GM12878 (cell line): ENCODE measurements at regions of chr12 and their contacts with region 1.

Region 1: DNA sequence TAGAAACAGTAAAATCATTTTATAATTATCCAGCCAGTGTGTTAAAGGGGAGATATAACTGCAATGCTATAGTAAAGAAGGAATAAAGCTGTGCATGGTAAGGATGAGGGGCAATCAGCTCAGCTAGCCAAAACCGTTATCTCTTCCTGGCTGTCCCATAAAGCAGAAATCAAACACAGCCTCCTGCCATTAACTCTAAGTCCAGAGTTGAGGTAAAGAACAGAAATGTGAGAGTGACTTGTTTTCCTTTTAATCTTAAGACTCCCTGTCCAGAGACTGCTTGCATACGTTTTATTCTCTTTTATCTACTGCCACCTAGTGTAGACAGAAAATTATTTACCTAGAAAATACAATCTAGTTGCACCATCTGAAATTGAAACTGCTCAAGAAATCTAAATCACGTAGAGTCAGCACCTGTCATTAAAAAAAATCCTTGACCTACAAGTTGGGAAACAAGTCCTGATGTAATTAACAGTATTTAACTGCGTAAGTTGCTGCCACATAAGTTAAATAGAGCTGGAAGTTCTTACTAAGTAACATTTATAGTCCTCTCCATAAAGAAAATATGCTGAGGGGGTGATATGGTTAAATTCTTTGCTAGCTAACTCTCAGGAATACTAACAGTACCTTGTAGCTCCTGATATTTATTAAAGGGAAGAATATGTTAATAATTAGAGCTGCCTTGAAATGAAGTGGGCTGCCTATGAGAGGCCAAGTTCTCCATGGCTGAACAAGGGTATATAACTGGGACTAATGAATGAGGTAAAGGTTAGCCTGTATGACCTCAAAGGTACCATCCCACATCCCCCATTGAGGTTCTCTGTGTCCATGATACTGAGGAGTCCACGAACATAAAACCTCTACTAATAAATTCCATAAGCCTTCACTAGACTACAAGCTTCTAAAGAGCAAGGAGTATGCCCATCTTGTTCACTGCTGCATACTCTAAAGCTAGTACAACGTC is 62.7 kb downstream of the GALNT4 start:
- DNase-seq: no peak
- ATAC-seq: peak; percentile 97
- H3K4me3 ChIP-seq: no peak overlapping the region
- H3K27ac ChIP-seq: no peak overlapping the region
- H3K4me1 ChIP-seq: no peaks in the 10 kb centered on the region
- H3K27me3 ChIP-seq: no peaks in the 10 kb centered on the region
- CTCF ChIP-seq: peak; percentile 30 to 68 (median 55); a peak in 5 of 6 replicates
- EP300 ChIP-seq: no peak
- POLR2A ChIP-seq: no peak
- RAD21 ChIP-seq: peak; percentile 90

Region 2: GRCh38 chr12:89019408-89020120 is 442.4 kb before region 1 on chr12:
- CTCF ChIA-PET with region 1: interaction called, 94 read pairs
- POLR2A ChIA-PET with region 1: no interaction called
- RAD21 ChIA-PET with region 1: interaction called, 31 read pairs
- SMC1A ChIA-PET with region 1: interaction called, 23 read pairs
- in situ Hi-C with region 1: loop called (anchors 5 kb)
- intact Hi-C with region 1: loop called (anchors 1 kb)
- DNase-seq: peak; percentile 32
- ATAC-seq: peak; percentile 99
- H3K4me3 ChIP-seq: no peak overlapping the region
- H3K27ac ChIP-seq: no peak overlapping the region
- H3K4me1 ChIP-seq: no peaks in the 10 kb centered on the region
- H3K27me3 ChIP-seq: no peaks in the 10 kb centered on the region
- CTCF ChIP-seq: peak; percentile 76 to 91 (median 77); a peak in 5 of 6 replicates
- EP300 ChIP-seq: no peak
- POLR2A ChIP-seq: no peak
- RAD21 ChIP-seq: peak; percentile 91

Region 3: GRCh38 chr12:89051065-89051677 is 410.8 kb before region 1 on chr12:
- CTCF ChIA-PET with region 1: interaction called, 9 read pairs
- POLR2A ChIA-PET with region 1: no interaction called
- RAD21 ChIA-PET with region 1: interaction called, 4 read pairs
- SMC1A ChIA-PET with region 1: interaction called, 12 read pairs
- in situ Hi-C with region 1: loop called (anchors 10 kb)
- intact Hi-C with region 1: loop called (anchors 1 kb)
- DNase-seq: no peak
- ATAC-seq: peak; percentile 70
- H3K4me3 ChIP-seq: no peak overlapping the region
- H3K27ac ChIP-seq: no peak overlapping the region
- H3K4me1 ChIP-seq: no peaks in the 10 kb centered on the region
- H3K27me3 ChIP-seq: no peaks in the 10 kb centered on the region
- CTCF ChIP-seq: peak; percentile 66 to 74 (median 69)
- EP300 ChIP-seq: no peak
- POLR2A ChIP-seq: no peak
- RAD21 ChIP-seq: peak; percentile 96

Region 4: GRCh38 chr12:89059721-89060541 is 402.0 kb before region 1 on chr12:
- CTCF ChIA-PET with region 1: interaction called, 10 read pairs
- POLR2A ChIA-PET with region 1: no interaction called
- RAD21 ChIA-PET with region 1: interaction called, 3 read pairs
- SMC1A ChIA-PET with region 1: interaction called, 3 read pairs
- in situ Hi-C with region 1: no loop called
- intact Hi-C with region 1: no loop called
- DNase-seq: no peak
- ATAC-seq: no peak
- H3K4me3 ChIP-seq: no peak overlapping the region
- H3K27ac ChIP-seq: no peak overlapping the region
- H3K4me1 ChIP-seq: no peaks in the 10 kb centered on the region
- H3K27me3 ChIP-seq: no peaks in the 10 kb centered on the region
- CTCF ChIP-seq: no peak
- EP300 ChIP-seq: no peak
- POLR2A ChIP-seq: no peak
- RAD21 ChIP-seq: no peak

Region 5: GRCh38 chr12:89451841-89452251 is 10.1 kb before region 1 on chr12:
- CTCF ChIA-PET with region 1: interaction called, 13 read pairs
- POLR2A ChIA-PET with region 1: no interaction called
- RAD21 ChIA-PET with region 1: no interaction called
- SMC1A ChIA-PET with region 1: interaction called, 5 read pairs
- in situ Hi-C with region 1: no loop called
- intact Hi-C with region 1: no loop called
- DNase-seq: no peak
- ATAC-seq: no peak
- H3K4me3 ChIP-seq: no peak overlapping the region
- H3K27ac ChIP-seq: no peak overlapping the region
- H3K4me1 ChIP-seq: no peaks in the 10 kb centered on the region
- H3K27me3 ChIP-seq: no peaks in the 10 kb centered on the region
- CTCF ChIP-seq: no peak
- EP300 ChIP-seq: no peak
- POLR2A ChIP-seq: no peak
- RAD21 ChIP-seq: no peak